Activated naive CD4-positive, alpha-beta T cell treated with anti-CD3 and anti-CD28 coated beads, Interleukin-2, amount 10 ng/mL, durations not matched to agents 7 days and 5 days (primary cell): ENCODE measurements at regions of chr17 and their contacts with region 1.

Region 1: DNA sequence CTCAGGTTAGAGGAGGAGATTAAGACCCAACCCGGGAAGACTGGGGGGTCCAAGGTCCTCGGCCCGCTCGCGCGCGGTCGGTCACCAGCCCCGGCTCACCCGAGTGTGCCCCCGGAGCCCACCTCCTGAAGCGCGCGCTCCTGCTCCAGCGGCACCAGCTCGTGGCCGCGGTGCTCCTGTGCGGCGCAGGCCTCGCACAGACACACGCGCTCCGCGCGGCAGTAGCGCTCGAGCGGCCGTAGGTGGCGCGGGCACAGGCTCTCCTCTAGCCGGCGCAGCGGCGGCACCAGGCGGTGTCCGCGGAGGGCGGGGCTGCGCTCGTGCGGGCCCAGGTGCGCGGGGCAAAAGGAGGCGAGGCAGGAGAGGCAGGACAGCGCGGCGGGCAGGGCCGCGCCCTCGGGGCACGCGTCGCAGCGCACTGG is 618 bp downstream of the TRIM47 start:
- DNase-seq: peak; percentile 85
- H3K4me3 Mint-ChIP-seq: peak overlapping the region; percentile 97
- H3K27ac Mint-ChIP-seq: peak overlapping the region; percentile 93
- H3K4me1 Mint-ChIP-seq: peaks cover 62% of the 10 kb centered on the region
- H3K27me3 Mint-ChIP-seq: peaks cover 48% of the 10 kb centered on the region

Region 2: GRCh38 chr17:75855310-75856081 is 22.3 kb before region 1 on chr17 and contains the start of gene WBP2:
- CTCF ChIA-PET with region 1: interaction called, 103 read pairs
- DNase-seq: peak; percentile 99
- H3K4me3 Mint-ChIP-seq: no peak within 1 kb of the TSS
- H3K27ac Mint-ChIP-seq: peak within 1 kb of the TSS; percentile 91
- H3K4me1 Mint-ChIP-seq: peaks cover 43% of the 10 kb centered on the region
- H3K27me3 Mint-ChIP-seq: no peaks in the 10 kb centered on the region